ENCODE measurements at regions of chr14 and their contacts with region 1.

Region 1: DNA sequence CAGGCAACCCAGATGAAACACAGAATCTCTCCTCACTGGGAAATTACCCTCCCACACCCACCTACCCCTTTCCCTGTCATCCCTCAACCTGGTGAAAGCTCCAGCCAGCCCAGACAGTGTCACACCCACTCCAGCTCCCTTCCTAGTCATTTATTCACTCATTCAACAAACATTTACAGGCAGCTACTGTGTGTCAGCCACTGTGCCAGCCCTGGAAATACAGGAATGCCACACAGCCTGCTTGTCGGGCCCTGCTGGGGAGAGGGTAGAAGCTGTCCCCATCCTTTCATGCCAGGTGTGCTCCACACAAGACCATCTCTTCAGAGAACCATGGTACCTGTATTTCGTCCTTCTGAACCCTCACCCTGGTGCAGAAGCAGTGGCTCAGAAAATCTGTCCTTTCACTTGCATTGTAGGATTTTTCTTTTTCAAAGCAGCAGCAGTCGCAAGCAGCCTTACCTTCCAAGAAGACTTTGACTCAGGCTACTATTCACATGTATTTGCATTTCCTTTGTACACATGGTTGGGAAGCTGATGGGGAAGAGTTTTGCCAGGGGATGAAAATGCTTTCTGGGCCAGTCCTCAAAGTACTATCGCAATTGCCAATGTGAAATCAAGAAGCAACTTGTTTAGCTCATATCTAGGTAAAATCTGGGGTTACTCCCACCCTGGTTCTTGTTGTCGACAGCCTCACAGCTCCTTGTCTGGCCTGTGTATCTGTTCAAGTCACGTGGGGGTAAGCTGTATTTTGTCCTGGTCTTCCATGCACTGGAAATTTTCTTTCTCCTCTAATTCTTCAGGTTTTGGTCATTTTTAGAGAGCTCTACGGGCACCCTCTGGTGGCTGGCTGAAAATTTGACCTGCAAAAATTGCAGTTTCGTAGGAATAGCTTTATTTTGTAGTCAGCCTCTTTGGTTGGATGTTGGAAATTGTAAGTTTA is 147.4 kb upstream of the EGLN3 start:
- DNase-seq: peak; percentile 14
- H3K4me3 Mint-ChIP-seq: no peak overlapping the region
- H3K27ac Mint-ChIP-seq: no peak overlapping the region
- H3K4me1 Mint-ChIP-seq: peaks cover 57% of the 10 kb centered on the region
- H3K27me3 Mint-ChIP-seq: peaks cover 2% of the 10 kb centered on the region

Region 2: GRCh38 chr14:34018564-34019244 is 79.6 kb before region 1 on chr14:
- intact Hi-C with region 1: loop called (anchors 1 kb)
- DNase-seq: peak; percentile 9
- H3K4me3 Mint-ChIP-seq: peak overlapping the region; percentile 82
- H3K27ac Mint-ChIP-seq: peak overlapping the region; percentile 93
- H3K4me1 Mint-ChIP-seq: peaks cover 34% of the 10 kb centered on the region
- H3K27me3 Mint-ChIP-seq: no peaks in the 10 kb centered on the region

Region 3: GRCh38 chr14:34059855-34060638 is 38.3 kb before region 1 on chr14:
- intact Hi-C with region 1: loop called (anchors 1 kb)
- DNase-seq: peak; percentile 59
- H3K4me3 Mint-ChIP-seq: peak overlapping the region; percentile 83
- H3K27ac Mint-ChIP-seq: peak overlapping the region; percentile 86
- H3K4me1 Mint-ChIP-seq: peaks cover 40% of the 10 kb centered on the region
- H3K27me3 Mint-ChIP-seq: peaks cover 20% of the 10 kb centered on the region

Region 4: GRCh38 chr14:34227834-34228649 is 129.7 kb after region 1 on chr14:
- intact Hi-C with region 1: loop called (anchors 2 kb)
- DNase-seq: peak; percentile 50
- H3K4me3 Mint-ChIP-seq: peak overlapping the region; percentile 35
- H3K27ac Mint-ChIP-seq: no peak overlapping the region
- H3K4me1 Mint-ChIP-seq: peaks cover 20% of the 10 kb centered on the region
- H3K27me3 Mint-ChIP-seq: peaks cover 37% of the 10 kb centered on the region

Measured in activated T-helper 2 cell treated with anti-CD3 and anti-CD28 coated beads, Interferon-gamma antibody, Interleukin-2, Interleukin-4, amounts not matched to agents 10 μg/mL and 5 μg/mL and 100 μg/mL, durations not matched to agents 14 hours and 24 hours and 36 hours (primary cell).